Activated CD8-positive, alpha-beta memory T cell treated with anti-CD3 and anti-CD28 coated beads, Interleukin-2, amount 10 ng/mL, durations not matched to agents 7 days and 5 days (primary cell): ENCODE measurements at regions of chr12 and their contacts with region 1.

Region 1: GRCh38 chr12:2682296-2683251 is 112.2 kb upstream of the FKBP4 start:
- DNase-seq: peak; percentile 71
- ATAC-seq: peak; percentile 79
- H3K4me3 Mint-ChIP-seq: peak overlapping the region; percentile 7
- H3K27ac Mint-ChIP-seq: peak overlapping the region; percentile 74
- H3K4me1 Mint-ChIP-seq: peaks cover 2% of the 10 kb centered on the region
- H3K27me3 Mint-ChIP-seq: no peaks in the 10 kb centered on the region

Region 2: GRCh38 chr12:2248901-2249381 is 433.6 kb before region 1 on chr12:
- CTCF ChIA-PET with region 1: no interaction called
- DNase-seq: no peak
- ATAC-seq: no peak
- H3K4me3 Mint-ChIP-seq: no peak overlapping the region
- H3K27ac Mint-ChIP-seq: no peak overlapping the region
- H3K4me1 Mint-ChIP-seq: no peaks in the 10 kb centered on the region
- H3K27me3 Mint-ChIP-seq: peaks cover 7% of the 10 kb centered on the region

Region 3: DNA sequence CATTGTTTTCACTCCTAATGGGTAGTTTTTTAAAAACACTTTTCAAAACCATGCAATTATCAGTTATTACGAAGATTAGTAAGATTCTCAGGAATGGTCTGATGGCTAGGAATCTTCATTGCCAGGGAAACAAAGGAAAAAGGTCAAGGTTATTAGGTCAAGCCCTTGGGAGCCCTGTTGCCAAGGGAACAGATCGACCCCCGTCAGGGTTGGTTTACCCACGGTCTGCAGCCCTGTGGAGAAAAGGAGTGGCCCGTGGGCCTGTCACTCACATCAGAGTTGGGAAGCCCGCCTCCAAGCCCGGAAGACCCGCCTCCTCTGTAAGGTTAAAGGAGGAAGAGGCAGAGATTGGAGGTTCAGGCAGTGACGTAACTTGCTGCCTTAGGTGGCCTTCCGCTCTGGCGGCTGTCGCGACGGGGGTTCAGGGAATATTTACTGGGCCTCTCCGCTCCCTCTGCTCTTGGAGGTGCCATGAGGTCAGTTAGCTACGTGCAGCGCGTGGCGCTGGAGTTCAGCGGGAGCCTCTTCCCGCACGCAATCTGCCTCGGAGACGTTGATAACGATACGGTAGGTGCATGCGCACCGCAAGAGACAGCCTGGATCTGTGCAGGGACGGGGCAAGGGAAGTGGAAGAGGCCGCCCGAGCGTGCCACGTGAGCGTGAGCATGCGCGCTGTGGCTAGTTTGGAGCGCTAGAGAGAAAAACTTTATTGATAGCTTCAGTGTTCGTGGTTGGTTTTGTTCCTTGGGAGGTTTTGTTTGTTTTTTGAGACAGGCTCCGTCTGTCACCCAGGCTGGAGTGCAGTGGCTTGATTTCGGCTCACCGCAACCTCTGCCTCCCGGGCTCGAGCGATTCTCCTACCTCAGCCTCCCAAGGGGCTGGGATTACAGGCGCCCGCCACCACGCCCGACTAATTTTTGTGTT is 130.0 kb after region 1 on chr12 and contains the start of gene ITFG2:
- CTCF ChIA-PET with region 1: interaction called, 10 read pairs
- DNase-seq: peak; percentile 99
- ATAC-seq: peak; percentile 96
- H3K4me3 Mint-ChIP-seq: peak within 1 kb of the TSS; percentile 99
- H3K27ac Mint-ChIP-seq: peak within 1 kb of the TSS; percentile 98
- H3K4me1 Mint-ChIP-seq: peaks cover 25% of the 10 kb centered on the region
- H3K27me3 Mint-ChIP-seq: no peaks in the 10 kb centered on the region
- total RNA-seq, gene ITFG2: 28.8 to 34.9 TPM

Region 4: DNA sequence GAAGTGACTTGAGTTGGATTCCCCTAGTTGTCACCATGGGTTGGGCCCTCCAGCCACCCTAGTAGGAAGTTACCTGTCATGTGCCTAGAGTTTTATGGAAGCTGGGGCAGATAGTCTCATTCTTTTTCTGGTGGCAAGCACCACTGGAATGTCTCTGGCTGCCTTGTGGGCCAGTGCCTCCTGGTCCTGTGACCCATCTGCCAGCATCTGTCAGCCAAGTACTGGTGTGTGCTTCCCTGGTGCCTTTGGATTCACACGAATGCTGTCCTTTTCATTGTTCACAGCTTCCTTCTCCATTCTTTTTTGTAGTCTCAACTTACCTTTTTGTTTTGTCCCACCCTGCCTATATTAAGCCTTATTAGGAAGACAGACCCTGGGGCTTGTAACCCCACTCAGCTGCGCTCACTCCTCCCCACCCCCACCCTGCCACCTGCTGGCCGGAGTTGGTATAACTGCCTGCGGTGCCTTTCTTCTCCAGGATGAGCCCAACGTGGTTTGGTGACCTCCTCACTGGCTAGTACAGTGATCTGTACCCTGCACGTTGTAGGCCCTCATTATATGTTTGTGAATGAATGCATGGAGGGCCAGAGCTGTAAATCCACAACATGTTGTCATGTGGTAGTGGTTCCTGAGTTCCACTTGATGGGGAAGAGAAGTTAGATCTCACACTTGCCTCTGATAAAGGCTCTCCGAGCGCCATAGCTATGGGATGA is 520.3 kb after region 1 on chr12:
- CTCF ChIA-PET with region 1: no interaction called
- DNase-seq: peak; percentile 64
- ATAC-seq: no peak
- H3K4me3 Mint-ChIP-seq: no peak overlapping the region
- H3K27ac Mint-ChIP-seq: no peak overlapping the region
- H3K4me1 Mint-ChIP-seq: peaks cover 6% of the 10 kb centered on the region
- H3K27me3 Mint-ChIP-seq: peaks cover 49% of the 10 kb centered on the region